HEK293 (cell line): ENCODE measurements at regions of chr12 and their contacts with region 1.

Region 1: DNA sequence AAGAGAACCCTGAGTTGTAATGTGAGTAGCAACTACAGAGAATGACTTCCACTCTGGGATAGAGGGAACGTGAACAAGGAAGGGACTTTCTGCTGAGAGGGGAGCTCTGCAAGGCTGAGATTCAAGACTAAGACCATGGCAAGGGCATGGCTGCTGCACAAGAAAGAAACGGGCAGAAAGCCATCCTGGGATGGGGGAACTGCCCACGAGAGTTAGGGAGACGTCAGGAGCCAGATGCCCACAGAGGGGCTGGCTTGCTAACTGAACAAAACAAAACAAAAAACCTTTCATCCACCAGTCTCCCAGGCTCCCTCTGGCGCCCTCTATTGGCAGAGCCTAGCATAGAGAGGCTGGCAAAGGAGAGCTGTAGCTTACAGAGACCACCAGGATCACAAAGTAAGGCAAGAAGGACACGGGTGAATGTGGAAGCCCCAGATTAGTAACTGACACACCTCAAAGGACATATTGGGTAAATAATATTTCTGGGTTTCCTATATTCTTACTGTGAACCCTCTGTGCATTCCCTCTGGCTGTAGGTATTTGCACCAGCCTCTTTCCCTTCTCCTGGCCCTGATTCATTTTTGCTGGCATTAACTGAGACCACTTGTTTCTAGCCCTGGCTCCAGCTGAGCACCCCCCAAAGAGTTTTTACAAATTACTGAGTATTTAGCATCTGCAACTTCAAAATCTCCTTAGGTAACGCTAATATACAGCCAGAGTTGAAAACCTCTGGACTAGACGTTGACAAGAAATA is 338.3 kb downstream of the EMP1 start:
- H3K4me3 ChIP-seq: no peak overlapping the region
- H3K27ac ChIP-seq: no peak overlapping the region
- H3K4me1 ChIP-seq: no peaks in the 10 kb centered on the region
- CTCF ChIP-seq: peak; percentile 70

Region 2: DNA sequence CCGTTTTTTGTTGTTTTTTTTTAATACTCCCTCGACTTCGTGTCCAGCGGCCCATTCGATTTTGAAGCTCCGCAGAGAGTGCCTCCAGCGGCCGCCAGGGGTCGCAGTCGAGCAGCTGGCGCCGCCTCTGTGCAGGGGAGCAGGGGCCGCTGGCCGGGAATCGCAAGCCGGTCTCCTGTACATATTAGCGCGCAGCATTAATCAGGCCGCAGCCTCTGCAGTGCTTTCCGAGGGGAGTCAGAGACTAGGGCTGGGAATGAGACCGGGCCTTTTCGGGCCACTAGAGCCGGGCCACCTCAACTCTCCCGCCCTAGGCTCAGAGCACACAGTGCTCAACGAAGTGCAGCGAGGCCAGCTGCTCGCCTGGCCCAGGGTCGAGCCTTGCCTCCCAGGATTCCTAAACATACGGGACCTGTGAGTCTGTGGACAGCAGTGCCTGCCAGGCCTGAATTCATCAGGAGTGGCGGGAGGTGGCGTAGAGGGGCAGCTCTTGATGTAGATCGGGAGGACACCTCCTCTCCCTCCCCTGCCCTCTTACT is 256.5 kb before region 1 on chr12:
- CTCF ChIA-PET with region 1: interaction called, 18 read pairs
- POLR2A ChIA-PET with region 1: no interaction called
- H3K4me3 ChIP-seq: no peak overlapping the region
- H3K27ac ChIP-seq: no peak overlapping the region
- H3K4me1 ChIP-seq: no peaks in the 10 kb centered on the region
- CTCF ChIP-seq: peak; percentile 84

Region 3: GRCh38 chr12:13440844-13441243 is 94.0 kb before region 1 on chr12:
- CTCF ChIA-PET with region 1: interaction called, 10 read pairs
- POLR2A ChIA-PET with region 1: no interaction called
- H3K4me3 ChIP-seq: no peak overlapping the region
- H3K27ac ChIP-seq: no peak overlapping the region
- H3K4me1 ChIP-seq: peaks cover 14% of the 10 kb centered on the region
- CTCF ChIP-seq: no peak

Region 4: GRCh38 chr12:13523536-13524307 is 11.1 kb before region 1 on chr12:
- CTCF ChIA-PET with region 1: interaction called, 15 read pairs
- POLR2A ChIA-PET with region 1: no interaction called
- H3K4me3 ChIP-seq: no peak overlapping the region
- H3K27ac ChIP-seq: no peak overlapping the region
- H3K4me1 ChIP-seq: no peaks in the 10 kb centered on the region
- CTCF ChIP-seq: no peak

Region 5: GRCh38 chr12:13552830-13553229 is 18.0 kb after region 1 on chr12:
- CTCF ChIA-PET with region 1: interaction called, 29 read pairs
- POLR2A ChIA-PET with region 1: no interaction called
- H3K4me3 ChIP-seq: no peak overlapping the region
- H3K27ac ChIP-seq: no peak overlapping the region
- H3K4me1 ChIP-seq: no peaks in the 10 kb centered on the region
- CTCF ChIP-seq: no peak